HepG2 (cell line): ENCODE measurements at regions of chr19 and their contacts with region 1.

Region 1: DNA sequence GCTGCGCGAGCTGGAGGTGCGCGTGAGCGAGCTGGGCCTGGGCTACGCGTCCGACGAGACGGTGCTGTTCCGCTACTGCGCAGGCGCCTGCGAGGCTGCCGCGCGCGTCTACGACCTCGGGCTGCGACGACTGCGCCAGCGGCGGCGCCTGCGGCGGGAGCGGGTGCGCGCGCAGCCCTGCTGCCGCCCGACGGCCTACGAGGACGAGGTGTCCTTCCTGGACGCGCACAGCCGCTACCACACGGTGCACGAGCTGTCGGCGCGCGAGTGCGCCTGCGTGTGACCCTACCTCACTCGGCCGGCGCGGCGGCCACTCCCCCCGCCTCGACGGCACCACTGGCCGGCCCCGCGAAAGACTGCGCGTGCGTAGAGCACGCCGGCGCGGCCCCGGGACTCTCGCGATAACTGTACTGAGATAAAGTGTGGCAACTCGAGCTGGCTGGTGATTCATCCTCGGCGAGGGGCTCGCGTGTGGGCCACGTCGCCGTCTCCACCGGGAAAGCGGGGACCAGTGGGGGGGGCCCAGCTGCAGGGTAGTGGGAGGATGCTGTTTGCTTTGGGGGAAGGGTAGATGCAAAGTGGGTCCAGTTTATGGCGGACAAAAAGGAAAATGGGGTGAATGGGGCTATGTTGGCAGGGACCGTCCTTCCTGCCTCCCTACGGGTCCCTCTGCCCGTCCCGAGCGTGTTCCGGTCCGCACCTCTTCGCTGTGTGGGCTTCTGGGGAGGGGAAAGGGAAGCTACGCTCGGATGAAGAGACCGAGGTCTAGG is 11.4 kb downstream of the FUT6 start:
- DNase-seq: peak; percentile 89
- ATAC-seq: peak; percentile 68
- H3K4me3 ChIP-seq: peak overlapping the region; percentile 73 to 90 (median 83)
- H3K27ac ChIP-seq: peak overlapping the region; percentile 89
- H3K4me1 ChIP-seq: peaks cover 55% of the 10 kb centered on the region
- H3K27me3 ChIP-seq: no peaks in the 10 kb centered on the region; a peak in 1 of 5 replicates
- CTCF ChIP-seq: peak; percentile 23; the same call in 1 of the 2 replicates
- EP300 ChIP-seq: no peak
- POLR2A ChIP-seq: peak; percentile 96 to 99
- RAD21 ChIP-seq: peak; percentile 8; the same call in 1 of the 2 replicates

Region 2: GRCh38 chr19:5557691-5558090 is 270.4 kb before region 1 on chr19:
- CTCF ChIA-PET with region 1: no interaction called
- POLR2A ChIA-PET with region 1: no interaction called
- in situ Hi-C with region 1: no loop called
- intact Hi-C with region 1: no loop called
- DNase-seq: no peak
- ATAC-seq: no peak
- H3K4me3 ChIP-seq: no peak overlapping the region
- H3K27ac ChIP-seq: no peak overlapping the region
- H3K4me1 ChIP-seq: no peaks in the 10 kb centered on the region
- H3K27me3 ChIP-seq: peaks cover 0 to 6% of the 10 kb centered on the region in 2 experiments; a peak in 2 of 5 replicates
- CTCF ChIP-seq: no peak
- EP300 ChIP-seq: no peak
- POLR2A ChIP-seq: no peak
- RAD21 ChIP-seq: no peak

Region 3: GRCh38 chr19:5713228-5713627 is 114.8 kb before region 1 on chr19:
- CTCF ChIA-PET with region 1: no interaction called
- POLR2A ChIA-PET with region 1: no interaction called
- in situ Hi-C with region 1: no loop called
- intact Hi-C with region 1: no loop called
- DNase-seq: no peak
- ATAC-seq: no peak
- H3K4me3 ChIP-seq: no peak overlapping the region
- H3K27ac ChIP-seq: no peak overlapping the region
- H3K4me1 ChIP-seq: peaks cover 34% of the 10 kb centered on the region
- H3K27me3 ChIP-seq: no peaks in the 10 kb centered on the region
- CTCF ChIP-seq: no peak
- EP300 ChIP-seq: no peak
- POLR2A ChIP-seq: no peak
- RAD21 ChIP-seq: no peak

Region 4: DNA sequence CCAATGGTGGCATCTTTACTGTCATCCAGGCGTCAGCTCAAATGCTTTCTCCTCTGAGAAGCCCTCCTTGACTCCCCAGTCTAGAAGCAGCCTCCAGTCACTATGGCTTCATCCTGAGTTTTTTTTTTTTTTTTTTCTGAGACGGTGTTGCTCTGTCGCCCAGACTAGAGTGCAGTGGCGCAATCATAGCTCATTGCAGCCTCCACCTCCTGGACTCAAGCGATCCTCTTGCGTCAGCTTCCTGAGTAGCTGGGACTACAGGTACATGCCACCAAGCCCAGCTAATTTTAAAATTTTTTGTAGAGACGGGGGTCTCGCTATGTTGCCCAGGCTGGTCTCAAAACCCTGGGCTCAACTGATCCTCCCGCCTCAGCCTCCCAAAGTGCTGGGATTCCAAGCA is 19.0 kb before region 1 on chr19:
- CTCF ChIA-PET with region 1: interaction called, 30 read pairs
- POLR2A ChIA-PET with region 1: interaction called, 46 read pairs
- in situ Hi-C with region 1: no loop called
- intact Hi-C with region 1: loop called (anchors 1 kb)
- DNase-seq: no peak
- ATAC-seq: no peak
- H3K4me3 ChIP-seq: no peak overlapping the region
- H3K27ac ChIP-seq: no peak overlapping the region
- H3K4me1 ChIP-seq: peaks cover 27% of the 10 kb centered on the region
- H3K27me3 ChIP-seq: no peaks in the 10 kb centered on the region
- CTCF ChIP-seq: no peak
- EP300 ChIP-seq: no peak
- POLR2A ChIP-seq: no peak
- RAD21 ChIP-seq: no peak

Region 5: GRCh38 chr19:5844456-5845433 is 16.7 kb after region 1 on chr19:
- CTCF ChIA-PET with region 1: no interaction called
- POLR2A ChIA-PET with region 1: interaction called, 96 read pairs
- in situ Hi-C with region 1: no loop called
- intact Hi-C with region 1: no loop called
- DNase-seq: no peak
- ATAC-seq: no peak
- H3K4me3 ChIP-seq: no peak overlapping the region
- H3K27ac ChIP-seq: no peak overlapping the region
- H3K4me1 ChIP-seq: peaks cover 42% of the 10 kb centered on the region
- H3K27me3 ChIP-seq: 0 out of 5 replicates have a peak, but pooled peaks cover 0 to 2% of the 10 kb centered on the region in 2 experiments
- CTCF ChIP-seq: no peak
- EP300 ChIP-seq: no peak
- POLR2A ChIP-seq: no peak
- RAD21 ChIP-seq: no peak

Region 6: DNA sequence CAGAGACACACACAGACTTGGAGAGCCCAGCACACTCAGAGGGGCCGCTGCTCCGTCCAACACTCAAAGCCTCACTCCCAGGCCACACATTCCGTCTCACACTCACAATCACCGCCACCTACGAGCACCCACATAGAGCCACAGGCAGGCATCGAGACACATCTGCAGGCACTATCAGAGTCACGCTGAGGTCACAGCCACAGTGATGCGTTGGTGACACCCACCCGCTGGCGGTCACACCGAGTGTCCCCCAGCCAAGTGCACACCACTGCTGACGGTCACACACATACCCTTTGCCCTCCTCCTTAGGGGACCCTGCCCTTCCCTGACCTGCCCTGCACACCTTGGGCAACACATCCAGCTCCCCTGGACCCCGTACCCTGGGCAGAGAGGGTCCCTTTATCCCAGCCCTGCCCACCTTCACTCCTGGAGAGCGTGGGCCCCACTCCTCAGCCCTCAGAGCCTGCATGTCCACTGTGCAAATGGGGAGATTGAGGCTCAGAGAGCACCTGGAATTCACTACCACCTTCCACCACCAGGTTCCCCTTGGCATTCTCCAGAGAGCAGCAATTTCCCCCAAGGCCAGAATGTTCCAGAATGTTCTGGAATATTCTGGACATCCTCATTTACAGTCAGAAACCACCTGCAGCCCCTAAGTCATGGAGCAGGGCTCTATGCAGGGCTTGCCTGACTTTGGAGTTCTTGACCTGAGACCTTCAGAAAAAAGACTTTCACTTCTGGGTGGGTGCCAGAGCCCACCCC is 36.8 kb after region 1 on chr19:
- CTCF ChIA-PET with region 1: no interaction called
- POLR2A ChIA-PET with region 1: interaction called, 54 read pairs
- in situ Hi-C with region 1: no loop called
- intact Hi-C with region 1: loop called (anchors 5 kb)
- DNase-seq: no peak
- ATAC-seq: no peak
- H3K4me3 ChIP-seq: no peak overlapping the region
- H3K27ac ChIP-seq: no peak overlapping the region
- H3K4me1 ChIP-seq: peaks cover 62% of the 10 kb centered on the region
- H3K27me3 ChIP-seq: no peaks in the 10 kb centered on the region
- CTCF ChIP-seq: no peak
- EP300 ChIP-seq: peak in 1 of 2 experiments; percentile 29; a peak in 1 of 4 replicates
- POLR2A ChIP-seq: no peak
- RAD21 ChIP-seq: no peak

Region 7: GRCh38 chr19:5880604-5881078 is 52.6 kb after region 1 on chr19:
- CTCF ChIA-PET with region 1: no interaction called
- POLR2A ChIA-PET with region 1: interaction called, 37 read pairs
- in situ Hi-C with region 1: no loop called
- intact Hi-C with region 1: no loop called
- DNase-seq: peak; percentile 90
- ATAC-seq: peak; percentile 89
- H3K4me3 ChIP-seq: peak overlapping the region in 1 of 3 experiments; percentile 22; a peak in 1 of 6 replicates
- H3K27ac ChIP-seq: peak overlapping the region; percentile 84
- H3K4me1 ChIP-seq: peaks cover 87% of the 10 kb centered on the region
- H3K27me3 ChIP-seq: no peaks in the 10 kb centered on the region
- CTCF ChIP-seq: 0 out of 2 replicates have a peak, but pooled peaks have one; percentile 16
- EP300 ChIP-seq: peak; percentile 54 to 93; a peak in 3 of 4 replicates
- POLR2A ChIP-seq: peak in 1 of 2 experiments; percentile 51; a peak in 1 of 4 replicates
- RAD21 ChIP-seq: no peak; the same call in 1 of the 2 replicates

Region 8: GRCh38 chr19:5897189-5897969 is 69.3 kb after region 1 on chr19:
- CTCF ChIA-PET with region 1: interaction called, 5 read pairs
- POLR2A ChIA-PET with region 1: interaction called, 79 read pairs
- in situ Hi-C with region 1: no loop called
- intact Hi-C with region 1: loop called (anchors 1 kb)
- DNase-seq: no peak
- ATAC-seq: no peak
- H3K4me3 ChIP-seq: no peak overlapping the region
- H3K27ac ChIP-seq: no peak overlapping the region
- H3K4me1 ChIP-seq: peaks cover 32% of the 10 kb centered on the region
- H3K27me3 ChIP-seq: no peaks in the 10 kb centered on the region
- CTCF ChIP-seq: peak; percentile 35; the same call in 1 of the 2 replicates
- EP300 ChIP-seq: no peak
- POLR2A ChIP-seq: no peak
- RAD21 ChIP-seq: no peak

Region 9: GRCh38 chr19:5926641-5927440 is 98.8 kb after region 1 on chr19:
- CTCF ChIA-PET with region 1: no interaction called
- POLR2A ChIA-PET with region 1: no interaction called
- in situ Hi-C with region 1: no loop called
- intact Hi-C with region 1: no loop called
- DNase-seq: no peak
- ATAC-seq: no peak
- H3K4me3 ChIP-seq: no peak overlapping the region
- H3K27ac ChIP-seq: no peak overlapping the region
- H3K4me1 ChIP-seq: no peaks in the 10 kb centered on the region
- H3K27me3 ChIP-seq: no peaks in the 10 kb centered on the region; a peak in 1 of 5 replicates
- CTCF ChIP-seq: no peak
- EP300 ChIP-seq: no peak
- POLR2A ChIP-seq: no peak
- RAD21 ChIP-seq: no peak